PC-9 (cell line): ENCODE measurements at regions of chr14 and their contacts with region 1.

Region 1: DNA sequence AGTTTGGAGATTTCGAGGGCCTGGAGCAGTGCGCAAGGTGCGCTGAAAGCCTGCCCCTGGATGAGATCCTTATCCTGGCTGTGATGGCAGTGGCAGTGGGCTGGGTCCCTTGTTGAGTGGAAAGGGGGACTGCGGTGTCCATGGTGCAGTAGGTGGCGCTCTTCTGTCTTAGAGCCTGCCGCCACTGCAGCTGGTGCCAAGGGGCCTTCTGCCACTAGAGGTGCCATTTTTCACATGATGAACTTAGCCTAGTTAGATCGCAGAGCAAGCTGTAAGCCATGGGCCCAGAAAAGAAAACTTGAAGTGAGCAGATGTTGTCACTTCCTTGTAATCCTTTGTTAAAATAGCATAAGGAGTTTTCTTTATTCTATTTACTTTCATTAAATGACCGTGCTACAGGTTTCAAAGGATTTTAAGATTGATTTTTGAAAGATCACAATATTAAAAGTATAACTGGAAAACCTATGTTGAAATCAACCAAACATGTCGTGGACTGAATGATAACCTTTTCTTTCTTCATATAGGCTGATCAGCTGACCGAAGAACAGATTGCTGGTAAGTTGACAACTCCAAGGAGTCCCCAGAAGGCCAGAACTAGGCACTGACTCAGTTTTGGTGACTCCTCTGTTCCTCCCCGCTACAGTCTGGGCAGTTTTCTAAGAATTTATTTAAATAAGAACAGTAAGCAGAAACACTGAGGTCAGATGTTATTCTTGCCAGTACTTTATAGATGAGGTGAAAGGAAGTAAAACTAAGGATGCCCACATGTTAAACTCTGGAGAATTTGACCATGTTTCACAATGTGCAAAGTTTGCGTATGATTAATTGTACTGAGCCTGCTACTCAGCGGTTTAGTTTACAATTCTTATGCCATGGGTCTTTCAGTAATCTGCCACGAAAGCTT is 3.0 kb downstream of the CALM1 start:
- DNase-seq: peak; percentile 58 to 67
- H3K4me3 ChIP-seq: peak overlapping the region; percentile 86; the same call in 1 of the 2 replicates
- H3K27ac ChIP-seq: no peak overlapping the region
- H3K4me1 ChIP-seq: peaks cover 16% of the 10 kb centered on the region
- H3K27me3 ChIP-seq: no peaks in the 10 kb centered on the region
- CTCF ChIP-seq: peak; percentile 90

Region 2: DNA sequence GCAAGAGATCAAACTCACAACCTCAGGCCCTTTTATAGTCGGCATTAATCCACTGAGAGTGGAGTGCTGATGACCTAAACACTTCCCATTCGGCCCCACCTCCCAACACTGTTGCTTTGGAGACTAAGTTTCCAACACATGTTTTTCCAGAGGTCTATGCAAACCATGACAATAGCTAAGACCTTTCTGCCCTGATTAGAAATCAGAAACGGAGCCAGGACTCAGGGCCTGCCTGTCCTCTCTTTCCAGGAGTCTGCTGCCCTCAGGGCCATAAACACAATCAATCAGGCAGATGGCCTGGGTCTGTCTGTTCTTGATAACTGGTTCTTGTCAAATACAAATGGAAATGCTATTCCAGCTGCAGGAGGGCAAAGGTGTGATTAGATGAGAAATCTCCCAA is 240.6 kb before region 1 on chr14:
- CTCF ChIA-PET with region 1: no interaction called
- POLR2A ChIA-PET with region 1: no interaction called
- intact Hi-C with region 1: no loop called
- DNase-seq: no peak
- H3K4me3 ChIP-seq: no peak overlapping the region
- H3K27ac ChIP-seq: no peak overlapping the region
- H3K4me1 ChIP-seq: no peaks in the 10 kb centered on the region
- H3K27me3 ChIP-seq: no peaks in the 10 kb centered on the region
- CTCF ChIP-seq: no peak

Region 3: DNA sequence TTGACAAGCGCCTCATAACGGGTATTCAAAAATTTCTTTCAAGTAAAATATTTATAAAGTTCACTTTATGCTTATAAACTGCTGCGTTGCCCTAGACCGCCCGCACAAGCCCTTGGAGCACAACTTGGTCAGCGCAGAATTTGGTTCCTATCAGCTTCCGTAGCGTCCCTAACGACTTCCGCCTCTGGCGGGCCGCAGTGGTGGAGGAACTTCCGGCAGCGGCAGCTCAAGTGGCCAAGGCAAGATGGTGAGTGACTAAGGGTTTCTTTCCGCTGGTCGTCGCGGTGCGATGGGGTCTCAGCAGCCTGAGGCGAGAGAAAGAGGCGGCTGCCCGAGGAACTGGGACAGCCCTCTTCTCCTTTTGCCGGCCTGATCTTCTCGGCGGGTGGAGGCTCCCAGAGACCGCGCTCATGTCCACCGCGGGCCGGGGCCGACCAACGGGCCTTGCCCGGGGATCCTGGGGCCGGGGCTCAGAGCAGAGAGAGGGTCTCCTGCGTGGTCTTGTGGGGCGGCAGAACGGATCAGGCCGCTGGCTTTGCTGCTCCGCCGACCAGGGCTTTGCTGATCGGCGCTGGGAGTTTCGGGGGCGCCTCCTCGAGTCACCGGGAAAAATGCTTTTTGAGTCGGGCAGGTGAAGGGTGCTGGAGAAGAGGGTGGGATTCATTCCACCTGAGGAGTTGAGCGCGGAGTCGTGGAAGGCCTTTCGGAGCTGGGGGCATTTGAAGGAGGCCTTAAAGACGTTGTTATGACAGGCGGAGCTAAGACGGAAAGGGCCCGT is 143.2 kb before region 1 on chr14 and contains the start of gene PSMC1:
- CTCF ChIA-PET with region 1: no interaction called
- POLR2A ChIA-PET with region 1: no interaction called
- intact Hi-C with region 1: no loop called
- DNase-seq: peak; percentile 52 to 83
- H3K4me3 ChIP-seq: peak within 1 kb of the TSS; percentile 92
- H3K27ac ChIP-seq: peak within 1 kb of the TSS; percentile 74
- H3K4me1 ChIP-seq: peaks cover 13% of the 10 kb centered on the region
- H3K27me3 ChIP-seq: no peaks in the 10 kb centered on the region
- CTCF ChIP-seq: no peak
- total RNA-seq, gene PSMC1: 50.8 and 55.4 TPM in 2 replicates

Region 4: GRCh38 chr14:90301668-90302090 is 98.1 kb before region 1 on chr14:
- CTCF ChIA-PET with region 1: no interaction called
- POLR2A ChIA-PET with region 1: no interaction called
- intact Hi-C with region 1: loop called (anchors 2 kb)
- DNase-seq: peak in 1 of 2 experiments; percentile 42
- H3K4me3 ChIP-seq: no peak overlapping the region
- H3K27ac ChIP-seq: no peak overlapping the region
- H3K4me1 ChIP-seq: no peaks in the 10 kb centered on the region
- H3K27me3 ChIP-seq: no peaks in the 10 kb centered on the region
- CTCF ChIP-seq: peak; percentile 58

Region 5: GRCh38 chr14:90383075-90383730 is 16.6 kb before region 1 on chr14:
- CTCF ChIA-PET with region 1: no interaction called
- POLR2A ChIA-PET with region 1: no interaction called
- intact Hi-C with region 1: loop called (anchors 1 kb)
- DNase-seq: peak; percentile 87 to 94
- H3K4me3 ChIP-seq: peak overlapping the region; percentile 92
- H3K27ac ChIP-seq: peak overlapping the region; percentile 88
- H3K4me1 ChIP-seq: peaks cover 19% of the 10 kb centered on the region
- H3K27me3 ChIP-seq: no peaks in the 10 kb centered on the region
- CTCF ChIP-seq: no peak

Region 6: GRCh38 chr14:90599748-90600507 is 200.1 kb after region 1 on chr14:
- CTCF ChIA-PET with region 1: no interaction called
- POLR2A ChIA-PET with region 1: no interaction called
- intact Hi-C with region 1: loop called (anchors 1 kb)
- DNase-seq: peak; percentile 12 to 62
- H3K4me3 ChIP-seq: no peak overlapping the region
- H3K27ac ChIP-seq: peak overlapping the region; percentile 57
- H3K4me1 ChIP-seq: peaks cover 8% of the 10 kb centered on the region
- H3K27me3 ChIP-seq: no peaks in the 10 kb centered on the region
- CTCF ChIP-seq: no peak; the same call in 1 of the 2 replicates

Region 7: DNA sequence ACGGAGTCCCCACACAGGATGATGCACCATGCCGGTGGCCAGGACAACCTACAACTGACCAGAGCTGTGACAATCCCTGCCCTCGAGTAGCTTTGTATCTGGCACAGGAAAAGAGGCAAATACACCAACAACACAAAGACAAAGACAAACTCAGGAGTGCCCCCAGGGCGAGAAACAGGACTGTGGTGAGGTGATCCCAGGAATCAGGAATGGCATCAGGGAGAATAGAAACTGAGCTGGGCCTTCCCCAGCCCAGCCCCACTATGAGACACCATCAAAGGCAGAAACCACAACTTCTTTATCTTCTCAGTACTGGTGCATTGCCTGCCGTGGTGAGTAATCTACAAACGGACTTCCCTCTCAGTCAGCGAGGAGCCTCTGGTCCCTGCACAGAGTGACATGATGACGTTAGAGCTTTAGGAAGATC is 258.8 kb after region 1 on chr14:
- CTCF ChIA-PET with region 1: no interaction called
- POLR2A ChIA-PET with region 1: no interaction called
- intact Hi-C with region 1: no loop called
- DNase-seq: peak; percentile 15 to 42
- H3K4me3 ChIP-seq: no peak overlapping the region
- H3K27ac ChIP-seq: no peak overlapping the region
- H3K4me1 ChIP-seq: no peaks in the 10 kb centered on the region
- H3K27me3 ChIP-seq: no peaks in the 10 kb centered on the region
- CTCF ChIP-seq: no peak

Region 8: GRCh38 chr14:90697577-90698206 is 297.9 kb after region 1 on chr14:
- CTCF ChIA-PET with region 1: no interaction called
- POLR2A ChIA-PET with region 1: interaction called, 3 read pairs
- intact Hi-C with region 1: loop called (anchors 1 kb)
- DNase-seq: peak; percentile 38 to 53
- H3K4me3 ChIP-seq: no peak overlapping the region
- H3K27ac ChIP-seq: no peak overlapping the region
- H3K4me1 ChIP-seq: no peaks in the 10 kb centered on the region
- H3K27me3 ChIP-seq: no peaks in the 10 kb centered on the region
- CTCF ChIP-seq: peak; percentile 86